Mammary epithelial cell (primary cell): ENCODE measurements at regions of chr14 and their contacts with region 1.

Region 1: GRCh38 chr14:21734457-21735074 is 60.9 kb upstream of the OR4E1 start:
- DNase-seq: peak; percentile 34
- H3K4me3 ChIP-seq: no peak overlapping the region
- H3K27ac ChIP-seq: no peak overlapping the region
- H3K4me1 ChIP-seq: no peaks in the 10 kb centered on the region
- H3K27me3 ChIP-seq: peaks cover 3% of the 10 kb centered on the region
- CTCF ChIP-seq: peak; percentile 65 to 69

Region 2: GRCh38 chr14:21647380-21647779 is 87.2 kb before region 1 on chr14:
- CTCF ChIA-PET with region 1: interaction called, 3 read pairs
- dilution Hi-C with region 1: no loop called
- in situ Hi-C with region 1: no loop called
- intact Hi-C with region 1: loop called (anchors 10 kb)
- DNase-seq: no peak
- H3K4me3 ChIP-seq: no peak overlapping the region
- H3K27ac ChIP-seq: no peak overlapping the region
- H3K4me1 ChIP-seq: no peaks in the 10 kb centered on the region
- H3K27me3 ChIP-seq: peaks cover 5% of the 10 kb centered on the region
- CTCF ChIP-seq: no peak

Region 3: GRCh38 chr14:21768116-21768874 is 33.7 kb after region 1 on chr14:
- CTCF ChIA-PET with region 1: no interaction called
- dilution Hi-C with region 1: no loop called
- in situ Hi-C with region 1: no loop called
- intact Hi-C with region 1: no loop called
- DNase-seq: peak; percentile 24
- H3K4me3 ChIP-seq: no peak overlapping the region
- H3K27ac ChIP-seq: no peak overlapping the region
- H3K4me1 ChIP-seq: peaks cover 10% of the 10 kb centered on the region
- H3K27me3 ChIP-seq: no peaks in the 10 kb centered on the region
- CTCF ChIP-seq: peak; percentile 56 to 65

Region 4: GRCh38 chr14:21780429-21781084 is 46.0 kb after region 1 on chr14:
- CTCF ChIA-PET with region 1: no interaction called
- dilution Hi-C with region 1: no loop called
- in situ Hi-C with region 1: no loop called
- intact Hi-C with region 1: no loop called
- DNase-seq: no peak
- H3K4me3 ChIP-seq: no peak overlapping the region
- H3K27ac ChIP-seq: no peak overlapping the region
- H3K4me1 ChIP-seq: no peaks in the 10 kb centered on the region
- H3K27me3 ChIP-seq: no peaks in the 10 kb centered on the region
- CTCF ChIP-seq: no peak

Region 5: GRCh38 chr14:22510527-22511110 is 776.1 kb after region 1 on chr14:
- CTCF ChIA-PET with region 1: no interaction called
- dilution Hi-C with region 1: no loop called
- in situ Hi-C with region 1: no loop called
- intact Hi-C with region 1: no loop called
- DNase-seq: no peak
- H3K4me3 ChIP-seq: no peak overlapping the region
- H3K27ac ChIP-seq: no peak overlapping the region
- H3K4me1 ChIP-seq: no peaks in the 10 kb centered on the region
- H3K27me3 ChIP-seq: no peaks in the 10 kb centered on the region
- CTCF ChIP-seq: no peak